ENCODE measurements at regions of chrX and their contacts with region 1.

Region 1: DNA sequence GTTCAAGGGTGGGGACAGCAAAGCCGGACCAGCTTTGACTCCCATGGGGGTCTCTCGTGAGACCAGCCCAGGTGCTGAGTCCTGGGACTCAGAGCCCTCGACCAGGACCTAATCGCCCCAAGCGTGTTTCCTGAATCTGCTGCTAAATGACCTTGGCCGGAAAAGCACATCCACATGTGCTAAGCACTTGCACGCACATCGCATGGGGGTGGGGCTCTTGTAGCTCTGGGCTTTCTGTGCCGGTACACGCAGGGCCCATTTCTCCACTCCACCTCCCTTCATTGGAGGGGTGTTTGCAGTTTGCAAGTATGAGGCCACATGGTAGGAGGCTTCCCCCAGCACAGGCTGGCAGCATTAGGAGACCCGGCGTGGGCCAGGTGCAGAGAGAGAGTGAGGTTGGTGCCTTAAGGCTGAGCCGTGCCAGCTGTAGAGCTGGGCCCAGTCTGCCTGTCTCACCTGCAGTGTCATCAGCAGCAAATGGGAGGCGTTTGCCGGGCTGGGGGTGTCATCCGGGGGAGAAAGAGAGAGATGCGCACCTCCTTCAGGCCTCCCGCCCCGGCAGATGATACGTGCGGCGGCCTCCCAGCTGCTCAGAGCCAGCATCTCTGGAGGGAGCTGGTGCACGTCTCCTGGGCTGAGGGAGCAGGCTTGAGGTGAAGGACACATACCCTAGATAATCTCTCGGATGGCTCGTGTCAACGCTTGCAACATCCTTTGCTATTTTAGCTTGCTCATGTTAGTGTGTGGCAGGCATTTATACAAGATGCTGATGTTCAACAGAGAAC is 45.2 kb upstream of the CLCN4 start:
- DNase-seq: no peak
- H3K4me3 Mint-ChIP-seq: no peak overlapping the region
- H3K27ac Mint-ChIP-seq: peak overlapping the region; percentile 92
- H3K4me1 Mint-ChIP-seq: peaks cover 45% of the 10 kb centered on the region
- H3K27me3 Mint-ChIP-seq: no peaks in the 10 kb centered on the region

Region 2: DNA sequence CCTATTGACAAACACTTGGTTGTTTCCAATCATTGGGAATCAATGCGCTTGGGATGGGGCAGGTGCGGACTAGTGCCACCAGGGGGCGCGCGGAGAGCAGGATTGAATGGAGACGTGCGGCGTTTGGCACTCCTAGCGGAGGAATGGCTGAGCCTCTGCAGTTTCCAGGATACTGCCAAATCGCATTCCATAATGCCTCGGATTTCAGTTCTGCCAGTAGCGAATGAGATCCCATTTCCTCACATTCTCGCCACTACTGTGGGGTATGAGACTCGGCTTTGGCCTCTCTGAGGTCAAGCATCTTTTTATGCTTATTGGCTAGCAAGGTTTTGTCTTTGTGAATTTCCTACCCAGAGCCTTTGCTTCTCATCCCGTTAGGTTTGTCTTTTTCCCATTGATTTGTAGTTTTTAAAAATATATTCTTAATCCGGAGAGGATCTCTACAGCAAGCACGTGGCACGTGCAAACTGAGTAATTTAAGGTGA is 115.7 kb before region 1 on chrX:
- CTCF ChIA-PET with region 1: interaction called, 11 read pairs
- POLR2A ChIA-PET with region 1: no interaction called
- DNase-seq: peak; percentile 73
- H3K4me3 Mint-ChIP-seq: no peak overlapping the region
- H3K27ac Mint-ChIP-seq: no peak overlapping the region
- H3K4me1 Mint-ChIP-seq: peaks cover 4% of the 10 kb centered on the region
- H3K27me3 Mint-ChIP-seq: peaks cover 2% of the 10 kb centered on the region

Region 3: DNA sequence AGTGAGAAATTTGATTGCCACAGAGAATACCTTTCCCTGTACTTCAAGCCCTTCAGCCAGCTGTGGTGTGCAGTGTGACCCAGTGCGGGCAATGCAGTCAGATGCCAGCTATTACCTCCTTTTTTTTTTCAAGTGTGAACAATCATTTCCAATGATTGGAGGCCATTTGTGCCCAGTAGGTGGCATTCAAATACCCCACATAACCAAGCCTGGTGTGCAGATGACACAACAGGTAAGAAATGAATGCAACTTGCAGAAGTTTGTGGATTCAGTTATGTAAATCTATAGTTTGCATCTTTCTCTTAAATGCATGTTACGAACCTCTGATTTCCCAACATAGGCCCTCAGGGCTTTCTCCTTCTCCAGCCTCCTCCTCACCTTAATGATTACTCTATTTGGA is 143.2 kb after region 1 on chrX:
- CTCF ChIA-PET with region 1: no interaction called
- POLR2A ChIA-PET with region 1: no interaction called
- DNase-seq: no peak
- H3K4me3 Mint-ChIP-seq: no peak overlapping the region
- H3K27ac Mint-ChIP-seq: no peak overlapping the region
- H3K4me1 Mint-ChIP-seq: no peaks in the 10 kb centered on the region
- H3K27me3 Mint-ChIP-seq: no peaks in the 10 kb centered on the region

Measured in activated CD4-positive, alpha-beta T cell treated with anti-CD3 and anti-CD28 coated beads, Interleukin-2, amount 10 ng/mL, durations not matched to agents 7 days and 5 days (primary cell).